Activated CD4-positive, alpha-beta T cell treated with anti-CD3 and anti-CD28 coated beads for 36 hours (primary cell): ENCODE measurements at regions of chr17 and their contacts with region 1.

Region 1: GRCh38 chr17:18183334-18184142 is at the start of gene ALKBH5:
- DNase-seq: peak; percentile 98
- ATAC-seq: peak; percentile 84
- H3K4me3 Mint-ChIP-seq: peak within 1 kb of the TSS; percentile 97
- H3K27ac Mint-ChIP-seq: peak within 1 kb of the TSS; percentile 94
- H3K4me1 Mint-ChIP-seq: peaks cover 45% of the 10 kb centered on the region
- H3K27me3 Mint-ChIP-seq: no peaks in the 10 kb centered on the region
- total RNA-seq, gene ALKBH5: 163 to 168 TPM

Region 2: DNA sequence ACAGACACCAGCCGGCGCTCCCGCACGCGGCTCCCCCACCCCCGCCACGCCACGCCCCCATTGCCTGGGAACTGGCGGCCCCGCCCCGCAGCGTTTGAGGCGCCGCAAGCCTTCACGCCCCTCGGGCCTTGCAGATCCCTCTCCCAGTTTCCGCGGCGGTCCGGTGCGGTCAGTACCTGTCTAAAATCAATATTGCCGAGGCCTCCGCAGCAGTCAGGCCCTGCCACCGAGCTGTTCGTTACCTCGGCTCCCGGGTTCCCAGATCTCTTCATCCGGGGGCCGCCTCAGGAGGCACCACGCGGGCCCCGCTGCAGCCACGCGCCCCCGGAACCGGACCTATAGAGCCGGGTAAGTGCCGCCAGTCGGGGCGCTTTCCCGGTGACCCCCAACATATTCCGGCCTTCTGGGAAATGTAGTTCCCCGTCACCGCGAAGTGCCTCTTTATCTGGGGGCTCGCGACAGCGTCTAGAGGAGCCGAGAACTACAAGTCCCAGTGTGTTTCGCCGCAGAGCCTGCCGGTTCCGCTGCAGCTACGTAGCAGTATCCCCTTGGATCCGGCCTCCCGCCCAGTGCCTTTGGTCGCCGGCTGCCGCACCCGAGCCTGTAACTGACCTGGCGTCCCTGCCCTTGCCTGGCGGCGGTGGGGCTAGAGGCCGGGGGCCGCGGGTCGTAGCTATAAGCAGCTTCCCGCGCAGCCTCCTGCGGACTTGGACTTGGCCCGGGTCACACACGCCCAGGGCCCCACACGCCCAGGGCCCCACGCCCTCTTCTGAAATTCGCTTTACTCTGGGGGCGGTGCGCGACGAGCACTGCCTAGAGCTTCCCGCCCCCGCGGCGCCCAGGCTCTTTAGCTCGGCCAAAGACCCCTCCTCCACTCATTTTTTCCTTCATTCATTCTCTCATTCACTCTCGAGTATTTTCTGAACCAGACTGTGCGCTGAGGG is 591.9 kb before region 1 on chr17 and contains the start of gene PEMT:
- CTCF ChIA-PET with region 1: no interaction called
- POLR2A ChIA-PET with region 1: no interaction called
- intact Hi-C with region 1: loop called in 1 of 2 experiments (anchors 1 kb)
- DNase-seq: peak; percentile 96
- ATAC-seq: peak; percentile 96
- H3K4me3 Mint-ChIP-seq: peak within 1 kb of the TSS; percentile 92
- H3K27ac Mint-ChIP-seq: peak within 1 kb of the TSS; percentile 95
- H3K4me1 Mint-ChIP-seq: peaks cover 16% of the 10 kb centered on the region
- H3K27me3 Mint-ChIP-seq: no peaks in the 10 kb centered on the region
- total RNA-seq, gene PEMT: 30.4 to 32.3 TPM

Region 3: GRCh38 chr17:17836250-17836817 is 347.2 kb before region 1 on chr17:
- CTCF ChIA-PET with region 1: no interaction called
- POLR2A ChIA-PET with region 1: no interaction called
- intact Hi-C with region 1: loop called in 1 of 2 experiments (anchors 1 kb)
- DNase-seq: peak; percentile 99
- ATAC-seq: peak; percentile 74
- H3K4me3 Mint-ChIP-seq: peak overlapping the region; percentile 94
- H3K27ac Mint-ChIP-seq: peak overlapping the region; percentile 98
- H3K4me1 Mint-ChIP-seq: peaks cover 74% of the 10 kb centered on the region
- H3K27me3 Mint-ChIP-seq: no peaks in the 10 kb centered on the region

Region 4: DNA sequence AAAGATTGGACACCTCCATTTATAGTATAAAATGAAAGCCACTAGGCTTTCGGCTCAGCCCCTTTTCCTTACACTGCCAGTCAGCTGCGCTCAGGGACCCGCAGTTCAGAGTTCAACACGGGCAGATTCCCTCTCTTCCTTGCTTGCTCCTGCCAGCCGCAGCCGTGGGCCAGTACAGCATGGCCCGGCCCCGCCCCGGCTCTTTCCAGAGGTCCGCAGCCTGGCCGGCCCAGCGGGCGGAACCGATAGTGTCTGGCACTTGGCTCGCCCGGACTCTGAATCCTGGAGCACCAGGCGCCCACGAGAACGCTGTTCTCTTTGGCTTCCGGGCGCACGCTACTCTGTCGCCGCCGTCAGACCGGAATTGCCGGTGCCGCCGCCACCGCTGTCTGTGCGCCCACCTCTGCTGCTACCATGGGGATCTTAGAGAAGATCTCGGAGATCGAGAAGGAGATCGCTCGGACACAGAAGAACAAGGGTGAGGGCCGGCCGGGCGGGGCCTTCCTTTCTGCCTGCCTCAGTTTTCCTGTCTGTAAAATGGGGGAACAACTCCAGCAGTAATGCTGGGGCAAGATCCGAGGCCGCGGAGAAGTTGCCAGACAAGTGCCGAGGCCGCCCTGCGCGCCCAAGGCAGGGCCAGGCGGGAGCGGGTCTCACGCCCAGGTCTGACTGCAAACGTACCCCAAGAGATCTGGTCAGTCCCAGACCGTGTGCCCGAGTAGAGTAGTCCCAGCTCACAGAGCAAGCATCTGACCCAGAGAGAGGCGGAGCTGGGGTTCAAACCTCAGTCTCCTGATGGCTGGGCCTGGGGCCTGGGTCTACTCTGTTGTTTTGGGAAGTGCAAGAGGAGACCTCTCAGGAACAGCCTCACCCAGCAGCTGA is 95.7 kb before region 1 on chr17 and contains the start of gene DRG2:
- CTCF ChIA-PET with region 1: no interaction called
- POLR2A ChIA-PET with region 1: no interaction called
- intact Hi-C with region 1: loop called (anchors 1 to 5 kb)
- DNase-seq: peak; percentile 93
- ATAC-seq: peak; percentile 90
- H3K4me3 Mint-ChIP-seq: peak within 1 kb of the TSS; percentile 99
- H3K27ac Mint-ChIP-seq: peak within 1 kb of the TSS; percentile 98
- H3K4me1 Mint-ChIP-seq: peaks cover 22% of the 10 kb centered on the region
- H3K27me3 Mint-ChIP-seq: no peaks in the 10 kb centered on the region
- total RNA-seq, gene DRG2: 42.5 to 45.6 TPM

Region 5: GRCh38 chr17:18217412-18218015 is 34.0 kb after region 1 on chr17:
- CTCF ChIA-PET with region 1: interaction called, 11 read pairs
- POLR2A ChIA-PET with region 1: no interaction called
- intact Hi-C with region 1: no loop called
- DNase-seq: peak; percentile 87
- ATAC-seq: peak; percentile 90
- H3K4me3 Mint-ChIP-seq: no peak overlapping the region
- H3K27ac Mint-ChIP-seq: no peak overlapping the region
- H3K4me1 Mint-ChIP-seq: no peaks in the 10 kb centered on the region
- H3K27me3 Mint-ChIP-seq: no peaks in the 10 kb centered on the region

Region 6: GRCh38 chr17:18235743-18236256 is 52.3 kb after region 1 on chr17:
- CTCF ChIA-PET with region 1: no interaction called
- POLR2A ChIA-PET with region 1: no interaction called
- intact Hi-C with region 1: no loop called
- DNase-seq: peak; percentile 78
- ATAC-seq: peak; percentile 91
- H3K4me3 Mint-ChIP-seq: no peak overlapping the region
- H3K27ac Mint-ChIP-seq: peak overlapping the region; percentile 74
- H3K4me1 Mint-ChIP-seq: peaks cover 16% of the 10 kb centered on the region
- H3K27me3 Mint-ChIP-seq: no peaks in the 10 kb centered on the region

Region 7: GRCh38 chr17:18291718-18292540 is 108.4 kb after region 1 on chr17:
- CTCF ChIA-PET with region 1: no interaction called
- POLR2A ChIA-PET with region 1: no interaction called
- intact Hi-C with region 1: no loop called
- DNase-seq: no peak
- ATAC-seq: no peak
- H3K4me3 Mint-ChIP-seq: no peak overlapping the region
- H3K27ac Mint-ChIP-seq: no peak overlapping the region
- H3K4me1 Mint-ChIP-seq: no peaks in the 10 kb centered on the region
- H3K27me3 Mint-ChIP-seq: no peaks in the 10 kb centered on the region

Region 8: GRCh38 chr17:18363101-18364049 is 179.8 kb after region 1 on chr17 and contains the start of gene SHMT1:
- CTCF ChIA-PET with region 1: no interaction called
- POLR2A ChIA-PET with region 1: no interaction called
- intact Hi-C with region 1: loop called in 1 of 2 experiments (anchors 1 kb)
- DNase-seq: peak; percentile 95
- ATAC-seq: peak; percentile 100
- H3K4me3 Mint-ChIP-seq: peak within 1 kb of the TSS; percentile 87
- H3K27ac Mint-ChIP-seq: peak within 1 kb of the TSS; percentile 66
- H3K4me1 Mint-ChIP-seq: peaks cover 12% of the 10 kb centered on the region
- H3K27me3 Mint-ChIP-seq: no peaks in the 10 kb centered on the region
- total RNA-seq, gene SHMT1: 58.7 to 61.0 TPM